Caco-2 (cell line): ENCODE measurements at regions of chr10 and their contacts with region 1.

Region 1: GRCh38 chr10:44733501-44734488 is 177.3 kb upstream of the TMEM72 start:
- DNase-seq: peak in 1 of 2 experiments; percentile 17
- H3K4me3 ChIP-seq: no peak overlapping the region
- H3K4me3 Mint-ChIP-seq: no peak overlapping the region
- H3K27ac Mint-ChIP-seq: no peak overlapping the region
- H3K4me1 ChIP-seq: peaks cover 4% of the 10 kb centered on the region; the same call in 1 of the 2 replicates
- H3K4me1 Mint-ChIP-seq: no peaks in the 10 kb centered on the region
- H3K27me3 ChIP-seq: no peaks in the 10 kb centered on the region
- H3K27me3 Mint-ChIP-seq: peaks cover 19% of the 10 kb centered on the region
- CTCF ChIP-seq: peak; percentile 35 to 66

Region 2: DNA sequence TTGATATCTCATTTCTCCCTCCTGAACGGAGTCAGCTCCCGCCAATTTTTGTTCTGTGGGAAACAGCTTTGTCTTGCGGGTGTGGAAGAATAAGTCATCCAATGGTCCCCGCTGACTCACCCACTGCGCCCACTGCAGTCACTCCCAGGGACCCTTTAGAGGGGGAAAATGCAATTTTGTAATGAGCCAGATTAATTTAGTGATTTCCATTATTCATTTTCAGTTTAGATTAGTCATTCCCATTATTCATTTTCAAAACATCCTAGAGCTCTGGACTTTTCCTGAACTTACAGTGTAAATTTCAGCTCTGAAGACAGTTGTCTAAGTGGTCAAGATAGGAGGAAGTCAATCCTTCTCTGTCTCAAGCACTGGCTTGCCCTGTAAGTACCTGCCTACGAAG is 22.4 kb after region 1 on chr10:
- CTCF ChIA-PET with region 1: no interaction called
- POLR2A ChIA-PET with region 1: no interaction called
- intact Hi-C with region 1: no loop called
- DNase-seq: no peak
- H3K4me3 ChIP-seq: no peak overlapping the region
- H3K4me3 Mint-ChIP-seq: no peak overlapping the region
- H3K27ac Mint-ChIP-seq: no peak overlapping the region
- H3K4me1 ChIP-seq: no peaks in the 10 kb centered on the region
- H3K4me1 Mint-ChIP-seq: no peaks in the 10 kb centered on the region
- H3K27me3 ChIP-seq: no peaks in the 10 kb centered on the region
- H3K27me3 Mint-ChIP-seq: peaks cover 29% of the 10 kb centered on the region
- CTCF ChIP-seq: no peak

Region 3: GRCh38 chr10:44809652-44810051 is 75.9 kb after region 1 on chr10:
- CTCF ChIA-PET with region 1: interaction called, 3 read pairs
- POLR2A ChIA-PET with region 1: no interaction called
- intact Hi-C with region 1: loop called (anchors 5 kb)
- DNase-seq: peak in 1 of 2 experiments; percentile 38
- H3K4me3 ChIP-seq: no peak overlapping the region
- H3K4me3 Mint-ChIP-seq: no peak overlapping the region
- H3K27ac Mint-ChIP-seq: no peak overlapping the region
- H3K4me1 ChIP-seq: no peaks in the 10 kb centered on the region
- H3K4me1 Mint-ChIP-seq: no peaks in the 10 kb centered on the region
- H3K27me3 ChIP-seq: no peaks in the 10 kb centered on the region
- H3K27me3 Mint-ChIP-seq: peaks cover 19% of the 10 kb centered on the region
- CTCF ChIP-seq: no peak

Region 4: GRCh38 chr10:44857363-44858016 is 123.7 kb after region 1 on chr10:
- CTCF ChIA-PET with region 1: interaction called, 4 read pairs
- POLR2A ChIA-PET with region 1: no interaction called
- intact Hi-C with region 1: loop called (anchors 2 kb)
- DNase-seq: peak in 1 of 2 experiments; percentile 78
- H3K4me3 ChIP-seq: no peak overlapping the region
- H3K4me3 Mint-ChIP-seq: no peak overlapping the region
- H3K27ac Mint-ChIP-seq: no peak overlapping the region
- H3K4me1 ChIP-seq: no peaks in the 10 kb centered on the region
- H3K4me1 Mint-ChIP-seq: no peaks in the 10 kb centered on the region
- H3K27me3 ChIP-seq: 0 out of 2 replicates have a peak, but pooled peaks cover 2% of the 10 kb centered on the region
- H3K27me3 Mint-ChIP-seq: peaks cover 8% of the 10 kb centered on the region
- CTCF ChIP-seq: peak; percentile 99